Activated naive CD4-positive, alpha-beta T cell treated with anti-CD3 and anti-CD28 coated beads for 36 hours (primary cell): ENCODE measurements at regions of chrX and their contacts with region 1.

Region 1: DNA sequence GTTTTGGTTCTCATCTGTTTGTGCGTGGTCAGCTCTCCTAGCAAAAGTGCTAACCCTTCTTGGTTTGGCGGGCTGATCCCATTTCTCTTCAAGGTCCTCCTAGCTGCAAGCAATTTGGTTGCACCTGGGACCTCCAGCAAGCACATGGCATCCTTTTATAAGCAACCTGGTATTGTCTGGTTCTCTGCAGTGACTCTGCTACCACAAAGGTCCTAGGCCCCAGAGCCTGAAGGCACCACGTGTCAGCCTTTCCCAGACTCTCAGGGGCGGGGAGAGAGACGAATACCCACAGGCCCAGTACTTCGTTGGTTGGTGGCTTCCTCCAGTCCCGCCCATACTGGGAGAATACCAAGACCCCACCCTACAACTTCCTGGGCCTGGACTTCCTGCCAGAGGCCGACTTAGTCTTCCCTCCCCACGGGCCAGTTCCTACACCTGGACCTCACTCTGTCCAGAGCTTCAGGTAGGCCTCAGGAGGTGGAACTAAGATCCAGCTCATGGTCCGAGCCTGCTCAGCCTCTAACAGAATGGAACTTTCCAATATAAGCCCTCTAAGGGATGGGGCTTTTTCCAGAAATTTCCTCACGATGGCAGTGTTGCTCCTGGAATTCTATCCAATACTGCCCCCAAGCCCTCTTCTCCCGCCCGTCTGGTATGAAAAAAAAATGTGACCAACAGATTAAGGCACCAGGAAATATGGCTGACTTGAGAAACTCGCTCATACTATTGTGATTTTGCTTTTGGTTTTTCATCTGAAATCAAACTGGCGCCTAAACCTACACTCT is 192.5 kb upstream of the STK26 start:
- DNase-seq: peak; percentile 85
- H3K4me3 Mint-ChIP-seq: peak overlapping the region; percentile 87
- H3K27ac Mint-ChIP-seq: peak overlapping the region; percentile 94
- H3K4me1 Mint-ChIP-seq: peaks cover 31% of the 10 kb centered on the region
- H3K27me3 Mint-ChIP-seq: no peaks in the 10 kb centered on the region

Region 2: GRCh38 chrX:131812836-131813825 is 17.5 kb before region 1 on chrX:
- CTCF ChIA-PET with region 1: interaction called, 10 read pairs
- intact Hi-C with region 1: loop called (anchors 1 kb)
- DNase-seq: peak; percentile 79
- H3K4me3 Mint-ChIP-seq: peak overlapping the region; percentile 67
- H3K27ac Mint-ChIP-seq: peak overlapping the region; percentile 89
- H3K4me1 Mint-ChIP-seq: peaks cover 30% of the 10 kb centered on the region
- H3K27me3 Mint-ChIP-seq: no peaks in the 10 kb centered on the region

Region 3: DNA sequence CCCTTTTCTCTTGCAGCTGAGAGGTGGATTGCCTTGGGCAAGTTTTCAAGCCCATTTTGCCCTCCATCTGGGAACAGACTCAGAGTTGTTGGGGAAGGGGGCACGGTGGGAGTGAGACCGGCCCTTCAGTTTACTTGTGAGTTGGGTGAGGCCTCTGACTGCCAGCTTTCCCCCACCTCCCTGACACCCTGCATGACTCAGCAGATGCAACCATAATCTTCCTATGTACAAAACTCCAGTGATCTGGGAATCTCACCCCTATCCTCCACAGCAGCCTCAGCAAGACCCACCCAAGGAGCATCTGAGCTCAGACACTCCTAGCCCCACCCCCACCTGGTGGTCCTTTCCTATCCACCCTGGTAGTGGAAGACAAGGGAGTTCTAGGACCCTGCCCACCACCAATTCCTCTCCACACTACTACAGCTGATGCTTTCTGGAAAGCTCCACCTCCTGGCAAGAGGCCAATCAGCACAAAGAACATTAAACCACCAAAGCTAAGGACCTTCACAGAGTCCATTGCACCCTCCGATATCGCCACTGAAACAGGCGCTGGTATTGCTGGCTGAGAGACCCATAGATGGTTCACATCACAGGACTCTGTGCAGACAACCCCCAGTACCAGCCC is 93.1 kb after region 1 on chrX:
- CTCF ChIA-PET with region 1: no interaction called
- intact Hi-C with region 1: no loop called
- DNase-seq: no peak
- H3K4me3 Mint-ChIP-seq: no peak overlapping the region
- H3K27ac Mint-ChIP-seq: no peak overlapping the region
- H3K4me1 Mint-ChIP-seq: no peaks in the 10 kb centered on the region
- H3K27me3 Mint-ChIP-seq: no peaks in the 10 kb centered on the region

Region 4: DNA sequence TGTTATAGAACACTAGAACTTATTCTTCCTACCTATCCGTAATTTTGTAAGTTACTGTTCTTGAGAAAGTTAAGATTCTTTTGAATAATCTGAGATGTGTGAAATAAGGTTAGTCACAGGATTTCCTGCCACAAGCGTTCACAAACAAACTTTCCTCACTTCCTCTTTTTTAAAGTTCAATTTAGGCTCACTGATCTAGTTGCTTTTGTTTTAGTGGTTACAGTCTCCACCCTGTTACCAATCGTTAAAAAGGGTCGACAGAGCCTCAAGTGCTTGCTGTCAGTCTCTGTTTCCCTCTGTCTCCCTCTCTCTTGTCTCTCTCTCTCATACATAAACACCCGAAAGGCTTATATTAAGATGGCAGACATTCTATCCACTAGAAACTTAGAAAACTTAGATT is 156.7 kb after region 1 on chrX:
- CTCF ChIA-PET with region 1: no interaction called
- intact Hi-C with region 1: loop called (anchors 2 kb)
- DNase-seq: peak; percentile 28
- H3K4me3 Mint-ChIP-seq: peak overlapping the region; percentile 20
- H3K27ac Mint-ChIP-seq: peak overlapping the region; percentile 94
- H3K4me1 Mint-ChIP-seq: peaks cover 48% of the 10 kb centered on the region
- H3K27me3 Mint-ChIP-seq: no peaks in the 10 kb centered on the region

Region 5: GRCh38 chrX:132171478-132172260 is 341.1 kb after region 1 on chrX:
- CTCF ChIA-PET with region 1: no interaction called
- intact Hi-C with region 1: loop called (anchors 5 kb)
- DNase-seq: no peak
- H3K4me3 Mint-ChIP-seq: no peak overlapping the region
- H3K27ac Mint-ChIP-seq: no peak overlapping the region
- H3K4me1 Mint-ChIP-seq: no peaks in the 10 kb centered on the region
- H3K27me3 Mint-ChIP-seq: peaks cover 2% of the 10 kb centered on the region

Region 6: DNA sequence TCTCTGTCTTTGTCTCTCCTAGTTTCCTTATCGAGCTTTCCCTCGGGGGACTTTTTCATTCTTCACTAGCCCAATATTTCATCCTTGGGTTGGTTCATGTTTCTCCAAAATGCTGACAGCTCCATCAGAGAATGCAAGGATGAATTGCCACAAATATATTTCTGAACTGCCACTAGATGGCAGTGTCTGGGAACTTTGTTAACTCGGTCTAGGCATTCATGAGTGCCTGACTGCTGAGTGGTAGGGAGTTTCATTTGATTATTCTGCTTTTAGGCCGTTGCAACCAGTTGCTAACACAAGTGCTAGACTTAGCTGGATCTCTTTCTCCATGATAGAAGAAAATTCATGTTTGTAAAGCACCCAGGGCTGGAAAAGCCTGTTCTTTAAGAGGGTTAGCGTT is 462.2 kb after region 1 on chrX:
- CTCF ChIA-PET with region 1: interaction called, 3 read pairs
- intact Hi-C with region 1: loop called (anchors 1 kb)
- DNase-seq: peak; percentile 33
- H3K4me3 Mint-ChIP-seq: no peak overlapping the region
- H3K27ac Mint-ChIP-seq: no peak overlapping the region
- H3K4me1 Mint-ChIP-seq: peaks cover 3% of the 10 kb centered on the region
- H3K27me3 Mint-ChIP-seq: no peaks in the 10 kb centered on the region

Region 7: DNA sequence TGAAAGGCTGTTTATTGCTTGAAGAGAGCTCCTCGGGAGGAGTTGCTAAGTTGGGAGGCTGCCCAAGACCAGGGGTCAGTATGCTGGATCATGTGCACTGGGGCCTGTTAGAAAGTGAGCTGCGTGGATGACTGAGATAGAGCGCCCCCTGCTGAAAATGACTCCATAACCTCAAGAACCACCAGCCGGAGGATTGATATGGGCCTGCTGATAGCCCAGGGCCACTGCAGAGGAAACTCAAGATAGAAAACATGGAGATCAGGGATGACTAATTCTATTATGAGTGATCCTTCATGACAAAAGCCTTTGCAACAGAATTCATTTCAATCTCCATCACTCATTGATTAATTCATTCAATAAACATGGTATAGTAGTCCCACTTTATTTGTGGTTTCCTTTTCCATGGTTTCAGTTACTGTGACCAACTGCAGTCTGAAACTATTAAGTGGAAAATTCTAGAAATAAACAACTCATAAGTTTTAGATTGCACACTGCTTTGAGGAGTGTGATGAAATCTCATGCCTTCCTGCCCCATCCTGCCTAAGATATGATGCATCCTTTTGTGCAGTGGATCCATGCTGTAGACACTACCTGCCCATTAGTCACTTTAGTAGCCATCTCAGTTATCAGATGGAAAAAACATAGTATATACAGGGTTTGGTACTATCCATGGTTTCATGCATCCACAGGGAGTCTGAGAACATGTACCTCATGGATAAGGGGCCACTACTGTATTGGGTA is 785.0 kb after region 1 on chrX:
- CTCF ChIA-PET with region 1: interaction called, 5 read pairs
- intact Hi-C with region 1: loop called (anchors 2 kb)
- DNase-seq: peak; percentile 60
- H3K4me3 Mint-ChIP-seq: no peak overlapping the region
- H3K27ac Mint-ChIP-seq: no peak overlapping the region
- H3K4me1 Mint-ChIP-seq: no peaks in the 10 kb centered on the region
- H3K27me3 Mint-ChIP-seq: no peaks in the 10 kb centered on the region